Naive thymus-derived CD4-positive, alpha-beta T cell (primary cell): ENCODE measurements at regions of chr13 and their contacts with region 1.

Region 1: GRCh38 chr13:27406178-27406939 is 18.1 kb upstream of the GTF3A start:
- DNase-seq: peak in 7 of 9 donors; percentile 25 to 57 (median 48)
- ATAC-seq: peak; percentile 71
- H3K4me3 ChIP-seq: no peak overlapping the region
- H3K4me3 Mint-ChIP-seq: no peak overlapping the region
- H3K27ac ChIP-seq: no peak overlapping the region
- H3K27ac Mint-ChIP-seq: no peak overlapping the region
- H3K4me1 ChIP-seq: no peaks in the 10 kb centered on the region
- H3K4me1 Mint-ChIP-seq: peaks cover 0 to 6% (median 0%) of the 10 kb centered on the region in 7 donors
- H3K27me3 ChIP-seq: no peaks in the 10 kb centered on the region
- H3K27me3 Mint-ChIP-seq: peaks cover 0 to 37% (median 9%) of the 10 kb centered on the region in 5 donors

Region 2: GRCh38 chr13:27424246-27425157 is 18.1 kb after region 1 on chr13 and contains the start of gene GTF3A:
- CTCF ChIA-PET with region 1: interaction called, 9 read pairs
- POLR2A ChIA-PET with region 1: interaction called, 8 read pairs
- intact Hi-C with region 1: loop called (anchors 1 kb)
- DNase-seq: peak; percentile 83 to 97 (median 93)
- ATAC-seq: peak; percentile 77
- H3K4me3 ChIP-seq: peak within 1 kb of the TSS; percentile 71
- H3K4me3 Mint-ChIP-seq: peak within 1 kb of the TSS; percentile 81 to 96 (median 92)
- H3K27ac ChIP-seq: peak within 1 kb of the TSS; percentile 86
- H3K27ac Mint-ChIP-seq: peak within 1 kb of the TSS; percentile 88 to 98 (median 95)
- H3K4me1 ChIP-seq: peaks cover 24 to 45% of the 10 kb centered on the region in 2 donors
- H3K4me1 Mint-ChIP-seq: peaks cover 27 to 47% (median 42%) of the 10 kb centered on the region in 7 donors
- H3K27me3 ChIP-seq: no peaks in the 10 kb centered on the region
- H3K27me3 Mint-ChIP-seq: no peaks in the 10 kb centered on the region
- total RNA-seq, gene GTF3A: 123 to 254 (median 206) TPM

Region 3: GRCh38 chr13:27533155-27533643 is 126.8 kb after region 1 on chr13:
- CTCF ChIA-PET with region 1: interaction called, 3 read pairs
- POLR2A ChIA-PET with region 1: no interaction called
- intact Hi-C with region 1: loop called in 1 of 2 experiments (anchors 1 kb)
- DNase-seq: peak in 7 of 9 donors; percentile 17 to 51 (median 42)
- ATAC-seq: peak; percentile 83
- H3K4me3 ChIP-seq: no peak overlapping the region
- H3K4me3 Mint-ChIP-seq: peak overlapping the region in 6 of 10 donors; percentile 26 to 52 (median 44)
- H3K27ac ChIP-seq: no peak overlapping the region
- H3K27ac Mint-ChIP-seq: no peak overlapping the region
- H3K4me1 ChIP-seq: peaks cover 0 to 9% of the 10 kb centered on the region in 2 donors
- H3K4me1 Mint-ChIP-seq: peaks cover 0 to 12% (median 10%) of the 10 kb centered on the region in 7 donors
- H3K27me3 ChIP-seq: no peaks in the 10 kb centered on the region
- H3K27me3 Mint-ChIP-seq: peaks cover 0 to 17% (median 5%) of the 10 kb centered on the region in 5 donors

Region 4: GRCh38 chr13:27556109-27556508 is 149.8 kb after region 1 on chr13:
- CTCF ChIA-PET with region 1: no interaction called
- POLR2A ChIA-PET with region 1: no interaction called
- intact Hi-C with region 1: loop called in 1 of 2 experiments (anchors 2 kb)
- DNase-seq: no peak
- ATAC-seq: no peak
- H3K4me3 ChIP-seq: no peak overlapping the region
- H3K4me3 Mint-ChIP-seq: no peak overlapping the region
- H3K27ac ChIP-seq: no peak overlapping the region
- H3K27ac Mint-ChIP-seq: no peak overlapping the region
- H3K4me1 ChIP-seq: no peaks in the 10 kb centered on the region
- H3K4me1 Mint-ChIP-seq: peaks cover 0 to 8% (median under 1%) of the 10 kb centered on the region in 7 donors
- H3K27me3 ChIP-seq: no peaks in the 10 kb centered on the region
- H3K27me3 Mint-ChIP-seq: no peaks in the 10 kb centered on the region

Region 5: DNA sequence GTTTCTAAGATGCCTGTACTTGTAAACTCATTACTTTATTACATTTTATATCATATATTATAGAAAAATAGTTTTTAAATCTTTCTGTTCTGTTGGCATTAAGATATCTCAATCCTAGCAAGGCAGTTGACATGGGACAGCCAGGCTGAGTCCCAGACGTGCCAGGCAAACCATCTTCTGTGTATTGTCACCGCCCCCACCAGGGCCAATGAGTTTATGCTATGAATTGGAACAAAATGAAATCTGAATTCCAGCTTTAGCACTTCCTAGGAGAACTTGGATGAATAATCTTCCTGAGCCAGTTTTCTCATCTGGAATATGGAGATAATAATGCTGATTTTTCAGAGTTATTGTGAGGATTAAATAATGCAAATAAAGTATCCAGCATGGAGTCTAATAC is 306.1 kb after region 1 on chr13:
- CTCF ChIA-PET with region 1: no interaction called
- POLR2A ChIA-PET with region 1: no interaction called
- intact Hi-C with region 1: loop called (anchors 1 to 10 kb)
- DNase-seq: peak in 3 of 9 donors; percentile 24 to 29 (median 28)
- ATAC-seq: no peak
- H3K4me3 ChIP-seq: no peak overlapping the region
- H3K4me3 Mint-ChIP-seq: no peak overlapping the region
- H3K27ac ChIP-seq: no peak overlapping the region
- H3K27ac Mint-ChIP-seq: no peak overlapping the region
- H3K4me1 ChIP-seq: no peaks in the 10 kb centered on the region
- H3K4me1 Mint-ChIP-seq: no peaks in the 10 kb centered on the region
- H3K27me3 ChIP-seq: no peaks in the 10 kb centered on the region
- H3K27me3 Mint-ChIP-seq: peaks cover 13 to 29% (median 16%) of the 10 kb centered on the region in 5 donors